ENCODE measurements at regions of chr17 and their contacts with region 1.

Region 1: GRCh38 chr17:27654654-27655524 is 23.9 kb downstream of the LGALS9 start:
- DNase-seq: peak; percentile 74 to 91
- ATAC-seq: peak; percentile 58
- H3K4me3 ChIP-seq: no peak overlapping the region
- H3K27ac ChIP-seq: no peak overlapping the region
- H3K4me1 ChIP-seq: no peaks in the 10 kb centered on the region
- H3K27me3 ChIP-seq: no peaks in the 10 kb centered on the region

Region 2: GRCh38 chr17:27756512-27757371 is 101.9 kb after region 1 on chr17:
- intact Hi-C with region 1: loop called (anchors 2 to 5 kb)
- DNase-seq: no peak
- ATAC-seq: no peak
- H3K4me3 ChIP-seq: no peak overlapping the region
- H3K27ac ChIP-seq: no peak overlapping the region
- H3K4me1 ChIP-seq: no peaks in the 10 kb centered on the region
- H3K27me3 ChIP-seq: no peaks in the 10 kb centered on the region